CD8-positive, alpha-beta memory T cell (primary cell): ENCODE measurements at regions of chr9 and their contacts with region 1.

Region 1: GRCh38 chr9:72038890-72039410 is 21.5 kb downstream of the C9orf57 start:
- DNase-seq: peak; percentile 22 to 69 (median 45)
- H3K4me3 ChIP-seq: no peak overlapping the region
- H3K4me3 Mint-ChIP-seq: peak overlapping the region in 2 of 7 donors; percentile 12 to 37
- H3K27ac ChIP-seq: no peak overlapping the region
- H3K27ac Mint-ChIP-seq: no peak overlapping the region
- H3K4me1 ChIP-seq: no peaks in the 10 kb centered on the region
- H3K4me1 Mint-ChIP-seq: peaks cover 5 to 6% (median 6%) of the 10 kb centered on the region in 3 donors
- H3K27me3 ChIP-seq: no peaks in the 10 kb centered on the region
- H3K27me3 Mint-ChIP-seq: peaks cover 8 to 11% of the 10 kb centered on the region in 2 donors

Region 2: GRCh38 chr9:71830929-71831328 is 208.0 kb before region 1 on chr9:
- CTCF ChIA-PET with region 1: no interaction called
- POLR2A ChIA-PET with region 1: no interaction called
- DNase-seq: no peak
- H3K4me3 ChIP-seq: no peak overlapping the region
- H3K4me3 Mint-ChIP-seq: no peak overlapping the region
- H3K27ac ChIP-seq: no peak overlapping the region
- H3K27ac Mint-ChIP-seq: no peak overlapping the region
- H3K4me1 ChIP-seq: no peaks in the 10 kb centered on the region
- H3K4me1 Mint-ChIP-seq: no peaks in the 10 kb centered on the region
- H3K27me3 ChIP-seq: no peaks in the 10 kb centered on the region
- H3K27me3 Mint-ChIP-seq: peaks cover 1 to 3% of the 10 kb centered on the region in 2 donors

Region 3: GRCh38 chr9:72089451-72090130 is 50.6 kb after region 1 on chr9:
- CTCF ChIA-PET with region 1: no interaction called
- POLR2A ChIA-PET with region 1: no interaction called
- DNase-seq: no peak
- H3K4me3 ChIP-seq: no peak overlapping the region
- H3K4me3 Mint-ChIP-seq: no peak overlapping the region
- H3K27ac ChIP-seq: no peak overlapping the region
- H3K27ac Mint-ChIP-seq: no peak overlapping the region
- H3K4me1 ChIP-seq: no peaks in the 10 kb centered on the region
- H3K4me1 Mint-ChIP-seq: no peaks in the 10 kb centered on the region
- H3K27me3 ChIP-seq: no peaks in the 10 kb centered on the region
- H3K27me3 Mint-ChIP-seq: peaks cover 4 to 19% of the 10 kb centered on the region in 2 donors

Region 4: DNA sequence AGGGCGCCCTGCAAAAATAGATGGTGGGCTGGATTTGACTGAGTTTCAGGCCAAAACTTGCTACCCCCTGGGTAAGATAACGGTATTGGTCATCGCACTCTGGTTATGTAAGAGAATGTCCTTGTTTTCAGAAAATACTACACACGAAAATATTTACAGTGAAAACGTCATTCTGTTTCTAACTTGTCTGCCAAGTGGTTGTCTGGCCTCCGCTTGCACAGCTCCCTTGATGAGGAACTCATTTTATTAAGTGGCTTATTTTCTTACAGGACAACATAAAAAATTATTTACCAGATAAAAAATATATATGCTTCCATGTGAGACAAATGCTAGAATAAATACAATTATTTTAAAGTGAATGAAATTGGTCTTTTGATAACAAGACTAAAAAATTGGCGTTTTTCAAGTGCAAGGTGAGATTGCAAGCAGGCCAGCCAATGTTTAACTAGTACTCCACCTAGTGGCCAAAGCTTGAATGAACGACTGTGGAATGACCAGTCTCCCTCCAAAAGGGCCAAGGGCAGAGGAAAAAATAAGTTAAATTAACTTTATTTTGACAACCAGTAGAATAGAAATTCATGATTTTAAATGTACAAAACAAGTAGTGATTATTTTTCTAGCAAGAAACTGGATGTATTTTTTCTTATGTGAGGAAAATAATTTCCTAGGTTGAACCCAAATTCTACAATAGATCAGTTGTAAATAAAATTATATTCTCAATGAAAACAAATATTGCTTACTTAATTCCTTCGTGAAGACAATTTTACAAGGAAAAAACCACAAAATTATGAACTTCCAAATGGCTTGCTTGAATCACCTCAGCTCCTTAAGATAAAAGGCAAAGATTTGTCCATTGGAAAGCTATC is 232.9 kb after region 1 on chr9:
- CTCF ChIA-PET with region 1: interaction called, 21 read pairs
- POLR2A ChIA-PET with region 1: interaction called, 3 read pairs
- DNase-seq: peak; percentile 6 to 50 (median 11)
- H3K4me3 ChIP-seq: no peak overlapping the region
- H3K4me3 Mint-ChIP-seq: no peak overlapping the region
- H3K27ac ChIP-seq: no peak overlapping the region
- H3K27ac Mint-ChIP-seq: no peak overlapping the region
- H3K4me1 ChIP-seq: no peaks in the 10 kb centered on the region
- H3K4me1 Mint-ChIP-seq: no peaks in the 10 kb centered on the region
- H3K27me3 ChIP-seq: no peaks in the 10 kb centered on the region
- H3K27me3 Mint-ChIP-seq: peaks cover 5 to 10% of the 10 kb centered on the region in 2 donors